ENCODE measurements at regions of chr9 and their contacts with region 1.

Region 1: DNA sequence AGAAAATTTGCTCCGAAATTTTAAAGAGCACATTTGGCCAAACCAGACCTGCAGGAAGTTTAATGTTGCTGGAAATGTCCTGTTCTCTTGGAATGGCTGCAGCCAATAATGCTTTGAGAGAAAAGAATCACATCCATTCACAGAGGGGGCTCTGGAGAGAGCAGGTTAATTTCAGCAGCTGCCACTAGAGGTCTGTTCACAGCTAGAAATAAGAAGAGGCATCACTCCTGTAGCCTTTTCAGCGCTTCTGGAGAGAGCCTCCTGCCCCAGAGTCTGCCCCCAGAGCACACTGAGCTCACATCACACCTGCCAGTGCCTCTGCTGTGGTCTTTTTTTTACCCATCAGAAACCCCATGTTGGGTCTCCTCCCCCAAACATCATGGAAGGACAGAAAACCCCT is 124.8 kb upstream of the RAD23B start:
- DNase-seq: peak; percentile 25 to 47
- H3K4me3 ChIP-seq: no peak overlapping the region
- H3K27ac ChIP-seq: no peak overlapping the region
- H3K4me1 ChIP-seq: peaks cover 0 to 3% (median 0%) of the 10 kb centered on the region in 4 experiments; a peak in 1 of 7 replicates
- H3K27me3 ChIP-seq: no peaks in the 10 kb centered on the region
- CTCF ChIP-seq: peak; percentile 12 to 74 (median 71)
- EP300 ChIP-seq: no peak
- POLR2A ChIP-seq: no peak
- RAD21 ChIP-seq: peak; percentile 69 to 73

Region 2: GRCh38 chr9:107137495-107138202 is 20.7 kb before region 1 on chr9:
- CTCF ChIA-PET with region 1: interaction called, 93 read pairs
- POLR2A ChIA-PET with region 1: no interaction called
- DNase-seq: no peak
- H3K4me3 ChIP-seq: no peak overlapping the region
- H3K27ac ChIP-seq: no peak overlapping the region
- H3K4me1 ChIP-seq: no peaks in the 10 kb centered on the region
- H3K27me3 ChIP-seq: no peaks in the 10 kb centered on the region
- CTCF ChIP-seq: peak in 2 of 3 experiments; percentile 65 to 82; a peak in 3 of 4 replicates
- EP300 ChIP-seq: no peak
- POLR2A ChIP-seq: no peak
- RAD21 ChIP-seq: peak; percentile 64 to 79

Region 3: DNA sequence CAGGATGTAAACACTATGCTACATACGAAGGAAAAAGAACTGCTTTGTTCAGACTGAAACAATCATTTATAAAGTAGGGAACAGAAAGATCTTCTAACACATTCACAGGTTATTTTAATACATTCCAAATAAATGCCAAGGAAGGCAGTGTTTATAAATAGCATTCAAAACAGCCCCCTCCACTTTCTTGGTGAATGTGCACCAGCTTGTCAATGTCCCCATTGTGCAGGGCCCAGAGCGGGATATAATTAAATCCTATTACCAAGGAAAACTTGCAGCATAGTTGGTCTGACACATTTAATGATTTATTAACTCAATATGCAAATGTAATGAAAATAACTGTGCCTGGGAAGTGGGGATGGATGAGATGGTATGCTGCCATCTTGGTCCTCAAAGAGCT is 11.2 kb before region 1 on chr9:
- CTCF ChIA-PET with region 1: interaction called, 93 read pairs
- POLR2A ChIA-PET with region 1: interaction called, 4 read pairs
- DNase-seq: no peak
- H3K4me3 ChIP-seq: no peak overlapping the region
- H3K27ac ChIP-seq: no peak overlapping the region
- H3K4me1 ChIP-seq: no peaks in the 10 kb centered on the region
- H3K27me3 ChIP-seq: peaks cover 0 to 2% (median 0%) of the 10 kb centered on the region in 4 experiments; a peak in 1 of 7 replicates
- CTCF ChIP-seq: no peak
- EP300 ChIP-seq: no peak
- POLR2A ChIP-seq: no peak
- RAD21 ChIP-seq: no peak

Region 4: GRCh38 chr9:107172160-107172978 is 14.0 kb after region 1 on chr9:
- CTCF ChIA-PET with region 1: interaction called, 91 read pairs
- POLR2A ChIA-PET with region 1: no interaction called
- DNase-seq: peak; percentile 41 to 80
- H3K4me3 ChIP-seq: no peak overlapping the region
- H3K27ac ChIP-seq: no peak overlapping the region
- H3K4me1 ChIP-seq: peaks cover 0 to 6% (median under 1%) of the 10 kb centered on the region in 4 experiments; a peak in 1 of 7 replicates
- H3K27me3 ChIP-seq: no peaks in the 10 kb centered on the region
- CTCF ChIP-seq: peak; percentile 32 to 91 (median 85)
- EP300 ChIP-seq: no peak
- POLR2A ChIP-seq: no peak
- RAD21 ChIP-seq: peak; percentile 94 to 95

Region 5: DNA sequence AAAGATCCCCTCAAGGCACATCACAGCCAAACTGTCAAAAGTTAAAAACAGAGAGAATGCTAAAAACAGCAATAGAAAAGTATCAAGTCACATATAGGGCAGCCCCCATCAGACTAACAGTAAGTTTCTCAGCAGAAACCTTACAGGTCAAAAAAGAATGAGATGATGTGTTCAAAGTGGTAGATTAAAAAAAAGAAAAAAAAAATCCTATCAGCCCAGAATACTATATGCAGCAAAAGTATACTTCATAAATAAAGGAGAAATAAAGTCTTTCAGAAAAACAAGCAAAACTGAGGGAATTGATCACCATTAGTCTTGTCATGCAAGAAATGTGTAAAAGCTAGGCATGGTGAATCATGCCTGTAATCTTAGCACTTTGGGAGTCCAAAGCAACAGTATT is 24.9 kb after region 1 on chr9:
- CTCF ChIA-PET with region 1: interaction called, 10 read pairs
- POLR2A ChIA-PET with region 1: no interaction called
- DNase-seq: no peak
- H3K4me3 ChIP-seq: no peak overlapping the region
- H3K27ac ChIP-seq: no peak overlapping the region
- H3K4me1 ChIP-seq: no peaks in the 10 kb centered on the region
- H3K27me3 ChIP-seq: no peaks in the 10 kb centered on the region
- CTCF ChIP-seq: no peak
- EP300 ChIP-seq: no peak
- POLR2A ChIP-seq: no peak
- RAD21 ChIP-seq: no peak

Measured in H1 (cell line).